ENCODE measurements at regions of chr1 and their contacts with region 1.

Region 1: GRCh38 chr1:109532365-109533136 is 7.1 kb upstream of the GPR61 start:
- DNase-seq: peak; percentile 86 to 94
- ATAC-seq: peak; percentile 90 to 92 (median 91)
- H3K4me3 ChIP-seq: peak overlapping the region; percentile 34
- H3K4me3 Mint-ChIP-seq: peak overlapping the region; percentile 85
- H3K27ac ChIP-seq: peak overlapping the region; percentile 70
- H3K27ac Mint-ChIP-seq: peak overlapping the region; percentile 80 to 91
- H3K4me1 ChIP-seq: peaks cover 14% of the 10 kb centered on the region
- H3K4me1 Mint-ChIP-seq: peaks cover 7 to 16% of the 10 kb centered on the region in 2 donors
- H3K27me3 ChIP-seq: no peaks in the 10 kb centered on the region
- H3K27me3 Mint-ChIP-seq: peaks cover 0 to 4% of the 10 kb centered on the region in 2 donors
- CTCF ChIP-seq: peak; percentile 80

Region 2: DNA sequence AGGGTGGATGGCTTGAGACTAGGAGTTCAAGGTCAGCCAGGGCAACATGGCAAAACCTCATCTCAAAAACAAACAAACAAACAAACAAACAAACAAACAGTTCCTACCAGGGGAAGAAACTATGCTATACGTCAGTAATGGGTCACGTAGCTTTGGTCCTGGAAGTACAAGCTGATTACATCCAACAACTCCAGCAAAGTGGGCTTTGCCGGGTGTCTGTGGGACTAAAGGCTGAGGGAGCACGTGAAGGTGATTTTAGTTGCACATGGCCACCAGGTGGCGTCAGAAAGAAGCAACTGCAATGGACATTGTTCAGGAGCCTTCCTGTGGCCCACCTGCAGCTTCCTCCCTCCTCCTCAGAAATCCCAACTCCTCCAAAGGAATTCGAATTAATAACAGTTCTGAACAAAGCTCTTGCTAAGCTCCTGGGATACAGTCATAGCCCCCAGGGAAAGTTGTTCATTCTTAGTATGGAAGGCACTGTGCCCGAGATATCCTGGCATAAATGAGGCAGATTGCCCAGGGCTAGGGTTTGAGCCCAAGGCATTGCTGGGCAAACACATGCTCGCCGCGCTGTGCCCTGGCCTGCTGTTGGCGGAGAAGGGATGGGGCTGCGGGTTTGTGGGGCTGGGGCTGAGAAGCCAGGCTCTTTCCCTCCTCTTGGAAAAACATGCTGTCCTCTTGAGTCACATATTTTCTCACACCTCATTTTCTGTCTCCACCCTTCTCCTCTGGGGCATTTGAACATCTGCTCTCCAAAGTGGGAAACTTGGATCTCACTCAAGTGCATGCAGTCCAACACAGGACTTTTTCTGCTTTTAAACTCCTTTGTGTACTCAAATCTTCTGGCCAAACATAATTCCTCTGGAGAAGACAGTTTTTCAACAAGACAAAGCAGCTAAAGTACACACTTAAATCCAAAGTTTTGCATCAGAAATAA is 704.3 kb before region 1 on chr1:
- intact Hi-C with region 1: loop called (anchors 5 kb)
- DNase-seq: peak; percentile 59 to 79
- ATAC-seq: peak in 2 of 3 donors; percentile 70 to 80
- H3K4me3 ChIP-seq: no peak overlapping the region
- H3K4me3 Mint-ChIP-seq: no peak overlapping the region
- H3K27ac ChIP-seq: no peak overlapping the region
- H3K27ac Mint-ChIP-seq: no peak overlapping the region
- H3K4me1 ChIP-seq: peaks cover 9% of the 10 kb centered on the region
- H3K4me1 Mint-ChIP-seq: peaks cover 14 to 16% of the 10 kb centered on the region in 2 donors
- H3K27me3 ChIP-seq: no peaks in the 10 kb centered on the region
- H3K27me3 Mint-ChIP-seq: no peaks in the 10 kb centered on the region
- CTCF ChIP-seq: peak; percentile 76

Region 3: GRCh38 chr1:109201123-109201703 is 331.3 kb before region 1 on chr1:
- intact Hi-C with region 1: loop called (anchors 1 kb)
- DNase-seq: peak in 1 of 2 donors; percentile 43
- ATAC-seq: peak in 1 of 3 donors; percentile 29
- H3K4me3 ChIP-seq: no peak overlapping the region
- H3K4me3 Mint-ChIP-seq: no peak overlapping the region
- H3K27ac ChIP-seq: no peak overlapping the region
- H3K27ac Mint-ChIP-seq: no peak overlapping the region
- H3K4me1 ChIP-seq: peaks cover 7% of the 10 kb centered on the region
- H3K4me1 Mint-ChIP-seq: peaks cover 0 to 15% of the 10 kb centered on the region in 2 donors
- H3K27me3 ChIP-seq: no peaks in the 10 kb centered on the region
- H3K27me3 Mint-ChIP-seq: peaks cover 8 to 11% of the 10 kb centered on the region in 2 donors
- CTCF ChIP-seq: peak; percentile 20

Region 4: GRCh38 chr1:109263597-109264398 is 268.8 kb before region 1 on chr1:
- intact Hi-C with region 1: loop called (anchors 1 kb)
- DNase-seq: peak; percentile 64 to 86
- ATAC-seq: peak; percentile 79 to 97 (median 94)
- H3K4me3 ChIP-seq: no peak overlapping the region
- H3K4me3 Mint-ChIP-seq: no peak overlapping the region
- H3K27ac ChIP-seq: no peak overlapping the region
- H3K27ac Mint-ChIP-seq: no peak overlapping the region
- H3K4me1 ChIP-seq: peaks cover 7% of the 10 kb centered on the region
- H3K4me1 Mint-ChIP-seq: peaks cover 0 to 5% of the 10 kb centered on the region in 2 donors
- H3K27me3 ChIP-seq: no peaks in the 10 kb centered on the region
- H3K27me3 Mint-ChIP-seq: no peaks in the 10 kb centered on the region
- CTCF ChIP-seq: peak; percentile 78

Region 5: GRCh38 chr1:109277434-109278204 is 254.9 kb before region 1 on chr1:
- intact Hi-C with region 1: loop called (anchors 1 kb)
- DNase-seq: peak; percentile 60 to 75
- ATAC-seq: peak; percentile 76 to 94 (median 87)
- H3K4me3 ChIP-seq: no peak overlapping the region
- H3K4me3 Mint-ChIP-seq: no peak overlapping the region
- H3K27ac ChIP-seq: no peak overlapping the region
- H3K27ac Mint-ChIP-seq: no peak overlapping the region
- H3K4me1 ChIP-seq: peaks cover 10% of the 10 kb centered on the region
- H3K4me1 Mint-ChIP-seq: peaks cover 6 to 17% of the 10 kb centered on the region in 2 donors
- H3K27me3 ChIP-seq: no peaks in the 10 kb centered on the region
- H3K27me3 Mint-ChIP-seq: no peaks in the 10 kb centered on the region
- CTCF ChIP-seq: peak; percentile 83

Region 6: GRCh38 chr1:109397538-109398342 is 134.8 kb before region 1 on chr1 and contains the start of gene SORT1:
- intact Hi-C with region 1: loop called (anchors 2 kb)
- DNase-seq: peak; percentile 50 to 74
- ATAC-seq: peak; percentile 92 to 98 (median 94)
- H3K4me3 ChIP-seq: peak within 1 kb of the TSS; percentile 37
- H3K4me3 Mint-ChIP-seq: peak within 1 kb of the TSS; percentile 92
- H3K27ac ChIP-seq: no peak within 1 kb of the TSS
- H3K27ac Mint-ChIP-seq: peak within 1 kb of the TSS in 1 of 2 donors; percentile 22
- H3K4me1 ChIP-seq: peaks cover 17% of the 10 kb centered on the region
- H3K4me1 Mint-ChIP-seq: peaks cover 13 to 17% of the 10 kb centered on the region in 2 donors
- H3K27me3 ChIP-seq: peaks cover 15% of the 10 kb centered on the region
- H3K27me3 Mint-ChIP-seq: peaks cover 25 to 33% of the 10 kb centered on the region in 2 donors
- CTCF ChIP-seq: no peak
- total RNA-seq, gene SORT1: 2.7 to 7.1 (median 3.7) TPM

Region 7: GRCh38 chr1:109482791-109483671 is 49.5 kb before region 1 on chr1:
- intact Hi-C with region 1: no loop called
- DNase-seq: peak; percentile 33 to 71
- ATAC-seq: peak; percentile 22 to 31 (median 23)
- H3K4me3 ChIP-seq: peak overlapping the region; percentile 48
- H3K4me3 Mint-ChIP-seq: peak overlapping the region; percentile 93
- H3K27ac ChIP-seq: peak overlapping the region; percentile 37
- H3K27ac Mint-ChIP-seq: peak overlapping the region; percentile 83 to 87
- H3K4me1 ChIP-seq: peaks cover 17% of the 10 kb centered on the region
- H3K4me1 Mint-ChIP-seq: peaks cover 22 to 24% of the 10 kb centered on the region in 2 donors
- H3K27me3 ChIP-seq: peaks cover 1% of the 10 kb centered on the region
- H3K27me3 Mint-ChIP-seq: peaks cover 22 to 28% of the 10 kb centered on the region in 2 donors
- CTCF ChIP-seq: no peak

Region 8: GRCh38 chr1:109493805-109494539 is 38.6 kb before region 1 on chr1 and contains the start of gene CYB561D1:
- intact Hi-C with region 1: loop called (anchors 1 kb)
- DNase-seq: peak; percentile 87 to 94
- ATAC-seq: peak; percentile 92 to 98 (median 93)
- H3K4me3 ChIP-seq: peak within 1 kb of the TSS; percentile 99
- H3K4me3 Mint-ChIP-seq: peak within 1 kb of the TSS; percentile 93
- H3K27ac ChIP-seq: peak within 1 kb of the TSS; percentile 65
- H3K27ac Mint-ChIP-seq: peak within 1 kb of the TSS; percentile 76 to 93
- H3K4me1 ChIP-seq: peaks cover 54% of the 10 kb centered on the region
- H3K4me1 Mint-ChIP-seq: peaks cover 13 to 35% of the 10 kb centered on the region in 2 donors
- H3K27me3 ChIP-seq: no peaks in the 10 kb centered on the region
- H3K27me3 Mint-ChIP-seq: no peaks in the 10 kb centered on the region
- CTCF ChIP-seq: peak; percentile 91
- total RNA-seq, gene CYB561D1: 21.1 to 36.0 (median 34.7) TPM

Measured in natural killer cell (primary cell).